WTC11 (cell line): ENCODE measurements at regions of chrX and their contacts with region 1.

Region 1: GRCh38 chrX:82218361-82218760 is 1016.5 kb downstream of the SH3BGRL start:
- DNase-seq: no peak
- ATAC-seq: peak; percentile 66
- H3K4me3 Mint-ChIP-seq: no peak overlapping the region
- H3K27ac Mint-ChIP-seq: no peak overlapping the region; the same call in 1 of the 2 replicates
- H3K4me1 Mint-ChIP-seq: peaks cover 3% of the 10 kb centered on the region; the same call in 1 of the 2 replicates
- H3K27me3 Mint-ChIP-seq: no peaks in the 10 kb centered on the region
- CTCF ChIP-seq: 0 out of 2 replicates have a peak, but pooled peaks have one; percentile 22

Region 2: GRCh38 chrX:82230009-82230408 is 11.6 kb after region 1 on chrX:
- CTCF ChIA-PET with region 1: interaction called, 11 read pairs
- POLR2A ChIA-PET with region 1: no interaction called
- DNase-seq: no peak
- ATAC-seq: peak; percentile 44; the same call in 1 of the 2 replicates
- H3K4me3 Mint-ChIP-seq: no peak overlapping the region
- H3K27ac Mint-ChIP-seq: no peak overlapping the region
- H3K4me1 Mint-ChIP-seq: no peaks in the 10 kb centered on the region
- H3K27me3 Mint-ChIP-seq: no peaks in the 10 kb centered on the region; the same call in 1 of the 2 replicates
- CTCF ChIP-seq: no peak

Region 3: DNA sequence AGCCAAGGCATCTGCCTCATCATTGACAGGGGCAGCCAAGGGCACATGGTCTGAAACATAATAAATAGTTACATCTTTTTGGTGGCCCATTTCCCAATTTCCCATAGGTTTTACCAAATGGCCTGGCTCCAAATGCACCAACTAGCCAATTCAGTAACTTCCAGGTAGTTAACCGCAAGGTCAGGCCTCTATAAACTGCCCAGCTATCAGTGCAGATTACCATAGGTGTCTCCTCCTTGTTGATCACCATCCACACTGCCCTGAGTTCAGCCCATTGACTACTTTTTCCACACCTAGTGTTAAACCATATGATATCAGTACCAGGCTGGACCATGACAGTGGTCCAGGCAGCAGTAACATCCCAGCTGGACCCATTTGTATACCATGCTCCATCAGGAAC is 144.6 kb after region 1 on chrX:
- CTCF ChIA-PET with region 1: no interaction called
- POLR2A ChIA-PET with region 1: no interaction called
- DNase-seq: no peak
- ATAC-seq: no peak
- H3K4me3 Mint-ChIP-seq: no peak overlapping the region
- H3K27ac Mint-ChIP-seq: no peak overlapping the region
- H3K4me1 Mint-ChIP-seq: peaks cover 7% of the 10 kb centered on the region
- H3K27me3 Mint-ChIP-seq: no peaks in the 10 kb centered on the region
- CTCF ChIP-seq: no peak

Region 4: DNA sequence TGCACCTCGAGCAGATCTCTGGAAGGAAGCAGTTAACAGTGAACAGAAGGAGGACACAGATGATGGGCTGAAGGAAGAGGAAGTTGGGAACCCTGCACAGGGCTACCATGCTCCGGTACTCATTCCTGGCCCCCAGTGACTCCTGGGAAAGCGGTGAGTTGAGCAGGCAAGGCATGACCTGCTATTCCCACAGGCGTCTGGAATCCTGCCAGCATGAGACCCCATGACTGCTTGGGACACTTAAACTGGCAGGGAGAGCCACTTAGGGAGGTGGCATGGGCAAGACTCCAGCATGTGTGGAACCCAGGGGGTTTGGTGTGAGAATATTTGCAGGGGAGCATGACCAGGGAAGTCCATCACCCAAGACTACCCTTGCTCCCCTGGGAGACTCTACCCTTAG is 233.4 kb after region 1 on chrX:
- CTCF ChIA-PET with region 1: no interaction called
- POLR2A ChIA-PET with region 1: no interaction called
- DNase-seq: no peak
- ATAC-seq: no peak
- H3K4me3 Mint-ChIP-seq: no peak overlapping the region
- H3K27ac Mint-ChIP-seq: no peak overlapping the region
- H3K4me1 Mint-ChIP-seq: no peaks in the 10 kb centered on the region
- H3K27me3 Mint-ChIP-seq: no peaks in the 10 kb centered on the region
- CTCF ChIP-seq: no peak

Region 5: DNA sequence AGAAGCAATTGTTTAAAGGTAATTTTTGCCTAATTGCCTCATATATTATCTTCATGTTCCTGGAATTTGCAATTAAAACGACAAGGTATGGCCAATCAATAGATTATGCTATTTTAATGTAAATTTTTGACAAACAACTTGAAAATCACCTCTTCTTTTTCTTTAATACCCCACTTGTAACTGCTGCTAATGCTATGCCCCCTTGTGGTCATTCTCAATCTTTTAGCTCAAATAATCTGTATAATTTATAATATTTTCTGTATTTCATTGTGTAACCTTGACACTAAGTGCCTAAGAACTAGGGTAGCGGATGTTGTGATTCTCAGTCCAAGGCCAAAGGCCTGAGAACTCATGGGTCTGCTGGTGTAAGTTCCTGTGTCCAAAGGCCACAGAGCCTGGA is 458.0 kb after region 1 on chrX:
- CTCF ChIA-PET with region 1: interaction called, 14 read pairs
- POLR2A ChIA-PET with region 1: no interaction called
- DNase-seq: no peak
- ATAC-seq: no peak
- H3K4me3 Mint-ChIP-seq: no peak overlapping the region
- H3K27ac Mint-ChIP-seq: no peak overlapping the region
- H3K4me1 Mint-ChIP-seq: no peaks in the 10 kb centered on the region
- H3K27me3 Mint-ChIP-seq: no peaks in the 10 kb centered on the region
- CTCF ChIP-seq: no peak